HEK293 (cell line): ENCODE measurements at regions of chr12 and their contacts with region 1.

Region 1: GRCh38 chr12:93990832-93991803 is 157.3 kb upstream of the PLXNC1 start:
- H3K4me3 ChIP-seq: no peak overlapping the region
- H3K27ac ChIP-seq: no peak overlapping the region
- H3K4me1 ChIP-seq: no peaks in the 10 kb centered on the region
- CTCF ChIP-seq: no peak

Region 2: DNA sequence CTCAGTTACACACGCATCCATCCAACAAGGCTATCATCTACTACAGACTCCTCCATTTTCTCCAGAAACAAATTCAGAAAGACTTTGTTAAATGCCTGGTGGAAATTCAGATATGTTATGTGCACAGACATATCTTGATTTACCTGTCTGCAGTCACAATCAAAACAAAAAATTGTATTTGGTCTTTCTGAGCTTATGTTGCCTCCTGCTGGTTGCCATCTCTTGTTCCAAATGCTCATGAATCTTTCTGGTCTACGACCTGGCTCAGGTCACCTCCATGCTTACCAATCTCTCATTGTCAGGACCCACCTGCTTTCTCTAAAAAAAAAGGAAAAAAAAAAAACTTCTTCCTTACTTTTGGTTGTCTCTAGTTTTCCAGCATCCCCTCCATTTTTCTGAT is 11.9 kb before region 1 on chr12:
- CTCF ChIA-PET with region 1: interaction called, 12 read pairs
- POLR2A ChIA-PET with region 1: no interaction called
- H3K4me3 ChIP-seq: no peak overlapping the region
- H3K27ac ChIP-seq: no peak overlapping the region
- H3K4me1 ChIP-seq: peaks cover 3% of the 10 kb centered on the region; the same call in 1 of the 2 replicates
- CTCF ChIP-seq: no peak

Region 3: GRCh38 chr12:94010307-94010706 is 19.2 kb after region 1 on chr12:
- CTCF ChIA-PET with region 1: no interaction called
- POLR2A ChIA-PET with region 1: no interaction called
- H3K4me3 ChIP-seq: no peak overlapping the region
- H3K27ac ChIP-seq: no peak overlapping the region
- H3K4me1 ChIP-seq: no peaks in the 10 kb centered on the region
- CTCF ChIP-seq: no peak